Mucosa of descending colon (tissue), 3 donors: ENCODE measurements at regions of chr9 and their contacts with region 1.

Region 1: GRCh38 chr9:117224695-117225094 is 190.2 kb downstream of the ASTN2 start:
- DNase-seq: no peak
- ATAC-seq: no peak
- H3K4me3 ChIP-seq: no peak overlapping the region
- H3K4me1 ChIP-seq: no peaks in the 10 kb centered on the region
- CTCF ChIP-seq: no peak

Region 2: DNA sequence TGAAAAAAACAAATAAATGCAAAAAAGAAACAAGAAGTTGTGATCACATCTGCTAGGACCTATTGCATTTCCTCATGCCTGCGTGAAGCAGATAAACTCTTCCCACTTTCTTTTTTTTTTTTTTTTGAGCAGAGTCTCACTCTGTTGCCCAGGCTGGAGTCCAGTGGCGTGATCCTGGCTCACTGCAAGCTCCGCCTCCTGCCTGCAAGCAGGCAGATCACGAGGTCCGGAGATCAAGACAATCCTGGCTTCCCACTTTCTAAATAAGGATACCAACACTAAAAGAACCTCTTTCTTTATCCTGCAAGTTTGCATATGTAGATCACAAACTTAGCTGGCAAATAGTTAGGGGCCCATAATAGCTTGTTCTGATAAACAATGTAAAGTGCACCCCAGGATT is 61.5 kb after region 1 on chr9:
- intact Hi-C with region 1: loop called in 1 of 2 experiments (anchors 10 kb)
- DNase-seq: peak in 1 of 3 donors; percentile 24
- ATAC-seq: no peak
- H3K4me3 ChIP-seq: no peak overlapping the region
- H3K4me1 ChIP-seq: no peaks in the 10 kb centered on the region
- CTCF ChIP-seq: no peak